Endothelial cell of umbilical vein (primary cell): ENCODE measurements at regions of chr4 and their contacts with region 1.

Region 1: DNA sequence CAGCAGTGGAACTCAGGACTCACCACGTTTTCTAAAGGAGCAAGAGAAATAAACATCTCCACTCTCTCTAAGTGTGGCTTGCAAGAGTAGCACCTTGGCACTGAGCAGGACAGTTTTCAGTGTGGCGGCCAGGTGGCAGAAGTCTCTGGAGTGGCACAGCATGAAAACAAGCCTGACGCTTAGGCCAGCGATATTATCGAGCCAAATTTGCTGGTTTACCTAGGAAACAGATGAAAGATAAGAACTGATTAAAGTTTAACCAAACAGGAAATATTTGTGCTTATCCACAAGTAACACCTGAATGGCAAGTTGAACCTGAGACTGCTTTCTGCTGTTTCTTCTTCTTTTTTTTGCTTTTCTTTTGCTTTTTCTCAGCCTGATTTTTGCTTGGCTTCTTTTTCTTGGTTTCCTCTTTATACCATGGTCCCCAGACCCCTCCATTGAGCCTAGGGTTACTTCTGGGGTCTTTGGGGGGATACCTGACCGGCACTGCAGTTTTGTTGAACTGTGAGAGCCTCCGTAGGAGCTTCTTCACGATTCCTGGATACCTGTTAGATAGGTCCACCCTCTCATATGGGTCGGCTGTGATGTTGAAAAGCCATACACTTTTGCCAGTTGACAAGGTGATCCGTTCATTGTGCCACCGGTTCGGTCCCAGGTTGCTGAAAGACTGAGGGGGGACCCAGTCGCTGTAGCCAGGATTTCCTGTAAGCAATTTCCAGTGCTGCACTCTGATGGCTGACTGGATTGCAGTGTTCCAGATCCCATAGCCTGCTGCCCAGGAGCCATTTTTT is 77.3 kb downstream of the ARSJ start:
- DNase-seq: peak; percentile 26
- H3K4me3 ChIP-seq: no peak overlapping the region
- H3K27ac ChIP-seq: no peak overlapping the region
- H3K4me1 ChIP-seq: no peaks in the 10 kb centered on the region
- H3K27me3 ChIP-seq: no peaks in the 10 kb centered on the region
- CTCF ChIP-seq: no peak
- POLR2A ChIP-seq: no peak

Region 2: GRCh38 chr4:113564493-113564892 is 337.7 kb before region 1 on chr4:
- CTCF ChIA-PET with region 1: no interaction called
- POLR2A ChIA-PET with region 1: no interaction called
- dilution Hi-C with region 1: no loop called
- intact Hi-C with region 1: loop called (anchors 10 kb)
- DNase-seq: no peak
- H3K4me3 ChIP-seq: no peak overlapping the region
- H3K27ac ChIP-seq: no peak overlapping the region
- H3K4me1 ChIP-seq: peaks cover 18% of the 10 kb centered on the region
- H3K27me3 ChIP-seq: no peaks in the 10 kb centered on the region
- CTCF ChIP-seq: no peak
- POLR2A ChIP-seq: no peak

Region 3: DNA sequence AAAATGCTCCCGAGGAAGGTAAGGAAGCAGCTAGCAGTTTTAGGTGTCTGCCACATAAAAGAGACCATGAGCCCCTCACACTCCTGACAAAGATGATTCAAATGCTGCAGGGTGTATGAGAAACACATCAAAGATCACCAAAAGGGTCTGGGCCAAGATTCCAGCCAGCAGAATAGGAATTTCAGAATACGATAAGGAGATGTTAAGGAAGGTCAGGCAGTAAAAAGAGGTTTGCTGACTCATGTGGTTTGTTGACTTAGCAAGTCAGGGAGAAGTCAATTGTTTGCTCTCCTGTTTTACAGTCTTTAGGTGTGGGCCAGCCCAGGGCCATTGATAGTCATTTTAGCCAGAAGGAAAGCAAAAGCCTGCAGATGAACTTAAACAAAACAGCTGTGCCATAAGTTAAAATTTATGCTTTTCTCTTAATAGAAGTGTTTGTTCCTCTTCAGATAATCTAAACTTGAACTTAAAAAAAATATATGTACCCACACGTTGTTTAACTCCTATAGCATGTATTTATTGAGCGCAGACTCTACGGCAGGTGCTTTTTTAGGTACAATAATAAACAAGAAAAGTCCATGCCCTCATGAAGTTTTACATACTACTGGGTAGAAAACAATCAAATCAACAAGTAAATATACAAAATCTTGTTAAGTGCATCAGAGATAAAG is 256.3 kb before region 1 on chr4:
- CTCF ChIA-PET with region 1: no interaction called
- POLR2A ChIA-PET with region 1: no interaction called
- dilution Hi-C with region 1: no loop called
- intact Hi-C with region 1: no loop called
- DNase-seq: peak; percentile 89
- H3K4me3 ChIP-seq: no peak overlapping the region
- H3K27ac ChIP-seq: no peak overlapping the region
- H3K4me1 ChIP-seq: peaks cover 11% of the 10 kb centered on the region
- H3K27me3 ChIP-seq: no peaks in the 10 kb centered on the region
- CTCF ChIP-seq: no peak
- POLR2A ChIP-seq: no peak

Region 4: GRCh38 chr4:114378306-114378903 is 476.2 kb after region 1 on chr4:
- CTCF ChIA-PET with region 1: interaction called, 3 read pairs
- POLR2A ChIA-PET with region 1: no interaction called
- dilution Hi-C with region 1: no loop called
- intact Hi-C with region 1: loop called (anchors 5 kb)
- DNase-seq: peak; percentile 37
- H3K4me3 ChIP-seq: no peak overlapping the region
- H3K27ac ChIP-seq: no peak overlapping the region
- H3K4me1 ChIP-seq: no peaks in the 10 kb centered on the region
- H3K27me3 ChIP-seq: peaks cover 0 to 2% of the 10 kb centered on the region in 2 experiments
- CTCF ChIP-seq: peak in 1 of 2 donors; percentile 21
- POLR2A ChIP-seq: no peak